ENCODE measurements at regions of chr2 and their contacts with region 1.

Region 1: DNA sequence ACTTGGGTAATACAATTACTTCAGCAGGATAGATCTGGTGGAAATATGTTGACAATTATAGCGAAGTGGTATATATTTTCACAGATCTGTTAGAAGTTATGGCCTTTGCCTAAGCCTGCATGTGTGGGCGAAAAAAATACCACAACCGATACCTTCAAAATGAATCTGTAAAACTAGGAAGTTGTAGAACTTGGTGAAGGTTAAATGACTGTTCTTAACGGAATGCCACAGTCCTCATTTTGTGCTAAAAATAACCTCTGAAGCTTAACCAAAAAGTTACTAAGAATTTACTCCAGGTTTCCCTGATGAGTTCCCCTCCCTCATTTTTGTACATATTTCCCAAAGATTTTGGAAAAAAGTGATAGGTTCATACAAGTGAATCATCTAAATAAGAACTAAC is 550.7 kb downstream of the THSD7B start:
- DNase-seq: no peak
- H3K4me3 ChIP-seq: no peak overlapping the region
- CTCF ChIP-seq: no peak
- POLR2A ChIP-seq: no peak

Region 2: GRCh38 chr2:136770384-136770783 is 545.7 kb before region 1 on chr2:
- intact Hi-C with region 1: loop called (anchors 2 kb)
- DNase-seq: no peak
- H3K4me3 ChIP-seq: no peak overlapping the region
- CTCF ChIP-seq: no peak
- POLR2A ChIP-seq: no peak

Measured in lower leg skin (tissue), 4 donors.